Left lung (tissue), 14 donors: ENCODE measurements at regions of chr22 and their contacts with region 1.

Region 1: DNA sequence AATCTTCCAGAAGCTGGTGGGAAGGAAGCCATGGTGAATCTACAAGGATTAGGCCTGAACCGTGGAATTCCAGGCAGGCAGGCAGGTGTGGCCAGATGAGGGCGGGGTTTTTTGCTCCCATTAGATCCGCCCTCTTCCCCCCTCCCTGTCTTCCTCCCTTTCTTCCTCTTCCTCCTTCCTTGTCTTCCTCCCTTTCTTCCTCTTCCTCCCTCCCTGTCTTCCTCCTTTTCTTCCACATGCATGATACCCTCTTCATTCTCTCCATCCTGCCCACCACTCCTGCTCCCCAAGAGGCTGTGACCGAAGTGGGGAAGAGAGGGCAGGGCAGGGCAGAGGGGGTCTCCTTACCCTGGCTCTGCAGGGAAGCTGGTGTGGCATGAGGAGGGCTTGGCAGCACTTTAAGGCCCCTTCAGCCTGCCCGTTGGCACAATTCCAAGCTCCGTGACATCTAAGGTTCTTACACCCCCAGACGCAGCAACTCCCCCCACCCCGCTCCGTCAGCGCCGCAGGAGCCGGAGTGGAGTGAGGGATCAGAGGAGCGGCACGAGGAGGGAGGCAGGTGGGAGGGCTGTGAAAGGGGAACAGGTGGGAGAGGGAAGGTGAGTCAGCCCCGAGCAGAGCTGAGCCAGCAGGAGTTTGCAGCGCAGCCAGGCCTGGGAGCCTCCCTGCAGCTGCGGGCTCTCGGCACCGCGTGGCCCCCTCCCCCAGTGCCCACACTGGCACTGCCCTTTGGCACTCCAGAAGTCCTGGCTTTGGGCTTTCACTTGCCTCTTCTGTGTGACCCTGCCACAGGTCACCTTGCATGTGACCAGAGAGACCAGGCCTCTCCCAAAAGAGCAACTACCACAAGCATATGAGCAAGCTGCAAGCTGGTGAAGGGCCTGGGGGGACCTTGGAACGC is 32.1 kb downstream of the KCNJ4 start:
- DNase-seq: peak in 2 of 4 donors; percentile 53 to 66
- ATAC-seq: peak; percentile 58
- H3K4me3 ChIP-seq: no peak overlapping the region
- H3K27ac ChIP-seq: no peak overlapping the region
- H3K4me1 ChIP-seq: no peaks in the 10 kb centered on the region
- H3K27me3 ChIP-seq: no peaks in the 10 kb centered on the region
- CTCF ChIP-seq: no peak

Region 2: DNA sequence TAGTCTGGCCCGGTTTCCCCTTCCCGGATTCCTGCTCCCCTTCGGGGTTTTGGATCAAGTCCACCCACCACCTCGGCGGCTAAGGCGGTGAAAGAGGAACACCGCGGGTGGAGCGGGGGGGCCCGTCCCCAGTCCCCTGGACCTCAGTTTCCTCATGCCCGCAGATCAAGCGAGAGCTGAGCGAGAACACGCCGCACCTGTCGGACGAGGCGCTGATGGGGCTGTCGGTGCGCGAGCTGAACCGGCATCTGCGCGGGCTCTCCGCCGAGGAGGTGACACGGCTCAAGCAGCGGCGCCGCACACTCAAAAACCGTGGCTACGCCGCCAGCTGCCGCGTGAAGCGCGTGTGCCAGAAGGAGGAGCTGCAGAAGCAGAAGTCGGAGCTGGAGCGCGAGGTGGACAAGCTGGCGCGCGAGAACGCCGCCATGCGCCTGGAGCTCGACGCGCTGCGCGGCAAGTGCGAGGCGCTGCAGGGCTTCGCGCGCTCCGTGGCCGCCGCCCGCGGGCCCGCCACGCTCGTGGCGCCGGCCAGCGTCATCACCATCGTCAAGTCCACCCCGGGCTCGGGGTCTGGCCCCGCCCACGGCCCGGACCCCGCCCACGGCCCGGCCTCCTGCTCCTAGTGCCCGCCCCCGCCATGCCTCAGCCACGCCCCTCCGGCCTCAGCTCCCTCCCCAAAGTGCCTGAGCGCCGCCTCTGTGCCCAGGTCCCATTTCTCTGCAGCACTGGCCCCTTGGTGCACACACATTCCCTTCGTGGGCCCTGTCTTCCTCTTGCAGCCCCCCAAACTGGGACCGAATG is 208.4 kb before region 1 on chr22:
- intact Hi-C with region 1: no loop called
- DNase-seq: peak in 3 of 4 donors; percentile 73 to 91 (median 78)
- ATAC-seq: peak; percentile 68
- H3K4me3 ChIP-seq: peak overlapping the region; percentile 1 to 22
- H3K27ac ChIP-seq: peak overlapping the region in 1 of 2 donors; percentile 65
- H3K4me1 ChIP-seq: peaks cover 25 to 65% of the 10 kb centered on the region in 2 donors
- H3K27me3 ChIP-seq: no peaks in the 10 kb centered on the region
- CTCF ChIP-seq: no peak

Region 3: DNA sequence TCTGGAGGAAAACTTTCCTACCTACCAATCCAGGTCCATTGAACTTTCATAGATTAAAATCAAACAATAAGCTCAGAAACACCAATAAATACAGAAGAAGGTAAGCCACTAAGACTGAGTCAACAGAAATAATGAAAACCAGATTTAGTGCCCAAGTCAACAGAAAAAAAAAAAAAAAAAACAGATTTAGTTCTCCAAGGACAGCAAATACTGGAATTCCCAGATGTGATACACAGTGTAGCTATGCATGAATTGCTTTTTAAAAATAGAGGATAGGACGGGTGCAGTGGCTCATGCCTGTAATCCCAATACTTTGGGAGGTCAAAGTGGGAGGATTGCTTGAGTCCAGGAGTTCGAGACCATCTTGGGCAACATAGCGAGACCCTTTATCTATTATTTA is 131.4 kb after region 1 on chr22:
- intact Hi-C with region 1: loop called in 1 of 2 experiments (anchors 10 kb)
- DNase-seq: no peak
- ATAC-seq: no peak
- H3K4me3 ChIP-seq: no peak overlapping the region
- H3K27ac ChIP-seq: no peak overlapping the region
- H3K4me1 ChIP-seq: peaks cover 0 to 10% of the 10 kb centered on the region in 2 donors
- H3K27me3 ChIP-seq: peaks cover 0 to 31% of the 10 kb centered on the region in 2 donors
- CTCF ChIP-seq: no peak

Region 4: GRCh38 chr22:38566726-38567504 is 144.1 kb after region 1 on chr22:
- intact Hi-C with region 1: no loop called
- DNase-seq: no peak
- ATAC-seq: no peak
- H3K4me3 ChIP-seq: no peak overlapping the region
- H3K27ac ChIP-seq: no peak overlapping the region
- H3K4me1 ChIP-seq: peaks cover 3 to 20% of the 10 kb centered on the region in 2 donors
- H3K27me3 ChIP-seq: peaks cover 0 to 19% of the 10 kb centered on the region in 2 donors
- CTCF ChIP-seq: no peak